AG04450 (cell line): ENCODE measurements at regions of chr4 and their contacts with region 1.

Region 1: GRCh38 chr4:112327965-112328733 is 31.0 kb downstream of the ALPK1 start:
- DNase-seq: peak; percentile 29
- H3K4me3 ChIP-seq: no peak overlapping the region
- H3K27ac ChIP-seq: no peak overlapping the region
- H3K27me3 ChIP-seq: no peaks in the 10 kb centered on the region
- CTCF ChIP-seq: peak; percentile 69

Region 2: DNA sequence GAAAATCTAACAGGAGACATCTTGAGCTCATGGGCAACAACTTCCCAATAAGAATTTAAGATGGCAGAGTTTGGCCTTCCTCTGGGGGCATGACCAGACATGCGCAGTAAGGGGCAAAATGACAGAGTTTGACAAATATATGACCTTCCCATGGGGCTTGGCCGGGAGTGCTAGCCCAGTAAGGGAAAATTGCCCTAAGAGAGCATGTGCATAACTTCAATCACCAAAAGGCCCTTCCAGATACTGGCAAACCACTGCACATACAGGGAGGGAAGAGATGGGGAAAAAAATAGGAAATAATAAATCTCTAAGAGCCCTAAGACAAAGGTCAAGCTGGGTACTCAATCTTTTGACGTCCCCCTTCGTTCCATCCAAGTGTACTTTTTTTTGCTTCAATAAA is 55.9 kb before region 1 on chr4:
- CTCF ChIA-PET with region 1: no interaction called
- POLR2A ChIA-PET with region 1: no interaction called
- DNase-seq: no peak
- H3K4me3 ChIP-seq: no peak overlapping the region
- H3K27ac ChIP-seq: no peak overlapping the region
- H3K27me3 ChIP-seq: no peaks in the 10 kb centered on the region
- CTCF ChIP-seq: no peak

Region 3: GRCh38 chr4:112343330-112344080 is 15.4 kb after region 1 on chr4:
- CTCF ChIA-PET with region 1: interaction called, 10 read pairs
- POLR2A ChIA-PET with region 1: no interaction called
- DNase-seq: no peak
- H3K4me3 ChIP-seq: no peak overlapping the region
- H3K27ac ChIP-seq: no peak overlapping the region
- H3K27me3 ChIP-seq: no peaks in the 10 kb centered on the region
- CTCF ChIP-seq: no peak

Region 4: GRCh38 chr4:112523764-112524505 is 195.8 kb after region 1 on chr4:
- CTCF ChIA-PET with region 1: interaction called, 76 read pairs
- POLR2A ChIA-PET with region 1: no interaction called
- DNase-seq: no peak
- H3K4me3 ChIP-seq: peak overlapping the region; percentile 57
- H3K27ac ChIP-seq: no peak overlapping the region
- H3K27me3 ChIP-seq: peaks cover 59% of the 10 kb centered on the region
- CTCF ChIP-seq: peak; percentile 72

Region 5: GRCh38 chr4:112560084-112560483 is 231.9 kb after region 1 on chr4:
- CTCF ChIA-PET with region 1: no interaction called
- POLR2A ChIA-PET with region 1: no interaction called
- DNase-seq: no peak
- H3K4me3 ChIP-seq: no peak overlapping the region
- H3K27ac ChIP-seq: no peak overlapping the region
- H3K27me3 ChIP-seq: no peaks in the 10 kb centered on the region
- CTCF ChIP-seq: no peak

Region 6: GRCh38 chr4:112589206-112589605 is 261.1 kb after region 1 on chr4:
- CTCF ChIA-PET with region 1: interaction called, 19 read pairs
- POLR2A ChIA-PET with region 1: no interaction called
- DNase-seq: no peak
- H3K4me3 ChIP-seq: no peak overlapping the region
- H3K27ac ChIP-seq: no peak overlapping the region
- H3K27me3 ChIP-seq: no peaks in the 10 kb centered on the region
- CTCF ChIP-seq: no peak